Heart right ventricle (tissue), 16 donors: ENCODE measurements at regions of chr1 and their contacts with region 1.

Region 1: DNA sequence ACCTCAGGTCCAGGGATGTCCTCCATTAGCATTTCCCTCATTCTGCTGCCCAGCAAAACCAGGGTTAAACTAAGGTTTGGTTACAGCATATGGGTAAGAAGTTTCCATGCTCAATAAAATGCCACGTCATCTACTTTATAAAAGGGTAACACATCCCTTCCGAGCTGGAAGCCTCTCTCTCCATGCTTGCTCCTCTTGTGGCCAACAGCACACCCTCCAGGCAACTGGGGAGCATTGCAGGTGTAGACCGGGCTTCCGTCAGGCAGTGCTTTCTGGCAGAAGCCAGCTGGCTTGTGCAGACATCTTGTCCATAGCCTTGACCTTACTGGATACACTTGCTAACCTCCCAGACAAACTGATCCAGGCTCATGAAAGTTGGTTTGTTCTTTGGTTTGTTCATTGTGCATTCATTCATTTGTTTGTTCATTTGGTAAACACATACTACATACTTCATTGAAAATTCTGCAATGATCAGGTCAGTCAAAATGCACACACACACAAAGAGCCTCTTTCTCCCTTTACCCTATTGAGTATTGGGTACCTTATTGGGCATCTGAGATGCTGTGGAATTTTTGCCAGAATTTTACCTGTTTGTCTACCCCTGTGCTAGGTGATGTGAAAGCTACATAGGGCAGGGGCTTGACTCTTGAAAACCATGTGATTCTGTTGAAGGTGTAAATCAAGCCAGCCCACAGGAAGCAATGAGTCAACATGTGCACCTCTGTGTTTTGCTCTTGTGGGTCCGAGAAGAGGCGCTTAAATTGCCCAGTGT is 422.8 kb downstream of the CAMTA1 start:
- DNase-seq: peak; percentile 24 to 42
- ATAC-seq: peak in 7 of 8 donors; percentile 47 to 85 (median 70)
- H3K4me3 ChIP-seq: no peak overlapping the region
- H3K27ac ChIP-seq: no peak overlapping the region
- H3K4me1 ChIP-seq: no peaks in the 10 kb centered on the region
- H3K27me3 ChIP-seq: peaks cover 0 to 22% (median 8%) of the 10 kb centered on the region in 7 donors
- CTCF ChIP-seq: peak; percentile 50 to 75 (median 70)

Region 2: GRCh38 chr1:5565281-5566125 is 1642.6 kb before region 1 on chr1:
- intact Hi-C with region 1: loop called in 1 of 10 experiments (anchors 5 kb)
- DNase-seq: no peak
- ATAC-seq: no peak
- H3K4me3 ChIP-seq: no peak overlapping the region
- H3K27ac ChIP-seq: no peak overlapping the region
- H3K4me1 ChIP-seq: no peaks in the 10 kb centered on the region
- H3K27me3 ChIP-seq: peaks cover 0 to 7% (median 0%) of the 10 kb centered on the region in 7 donors
- CTCF ChIP-seq: no peak

Region 3: DNA sequence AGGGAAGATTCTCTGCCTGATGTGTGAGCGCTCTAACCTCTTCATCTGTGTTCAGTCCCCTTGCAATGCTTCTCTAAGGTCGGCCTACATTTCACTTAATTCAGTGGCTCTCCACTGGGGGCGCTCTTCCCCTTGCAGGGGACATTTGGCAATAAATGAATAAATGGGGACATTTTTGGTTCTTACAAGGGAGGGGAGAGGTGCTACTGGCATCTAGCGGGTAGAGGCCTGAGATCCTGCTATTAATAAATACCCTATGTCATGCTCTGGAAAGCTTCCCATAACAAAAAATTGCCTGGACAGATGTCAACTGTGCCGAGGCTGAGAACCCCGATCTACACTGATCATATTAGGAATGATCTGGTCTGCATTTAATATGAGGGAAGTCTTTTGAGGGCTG is 480.5 kb before region 1 on chr1:
- intact Hi-C with region 1: loop called in 6 of 10 experiments (anchors 5 to 10 kb)
- DNase-seq: peak; percentile 41 to 44
- ATAC-seq: peak; percentile 28 to 68 (median 58)
- H3K4me3 ChIP-seq: no peak overlapping the region
- H3K27ac ChIP-seq: no peak overlapping the region
- H3K4me1 ChIP-seq: peaks cover 0 to 14% (median 0%) of the 10 kb centered on the region in 9 donors
- H3K27me3 ChIP-seq: no peaks in the 10 kb centered on the region
- CTCF ChIP-seq: peak; percentile 72 to 90 (median 85)

Region 4: DNA sequence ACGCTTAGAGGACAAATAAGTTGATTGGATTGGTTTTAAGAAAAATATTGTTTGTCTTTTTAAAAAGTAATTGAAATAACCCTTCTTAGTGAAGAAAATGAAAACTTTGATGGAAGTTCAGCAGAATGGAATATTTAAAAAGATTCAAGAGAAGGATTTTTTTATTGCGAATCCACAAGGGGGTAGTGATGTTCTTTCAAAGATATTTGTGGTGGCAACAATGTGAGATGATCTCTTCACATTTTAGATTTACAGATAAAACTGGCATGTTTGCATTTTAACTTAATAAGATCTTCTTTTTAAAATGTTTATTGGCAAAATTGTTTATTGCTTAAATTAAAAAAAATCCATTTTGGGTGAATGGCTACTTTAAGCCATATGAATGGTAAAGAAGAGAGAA is 413.9 kb before region 1 on chr1:
- intact Hi-C with region 1: loop called in 3 of 10 experiments (anchors 5 to 10 kb)
- DNase-seq: no peak
- ATAC-seq: no peak
- H3K4me3 ChIP-seq: no peak overlapping the region
- H3K27ac ChIP-seq: no peak overlapping the region
- H3K4me1 ChIP-seq: peaks cover 0 to 77% (median 55%) of the 10 kb centered on the region in 9 donors
- H3K27me3 ChIP-seq: no peaks in the 10 kb centered on the region
- CTCF ChIP-seq: peak in 7 of 9 donors; percentile 36 to 65 (median 58)

Region 5: DNA sequence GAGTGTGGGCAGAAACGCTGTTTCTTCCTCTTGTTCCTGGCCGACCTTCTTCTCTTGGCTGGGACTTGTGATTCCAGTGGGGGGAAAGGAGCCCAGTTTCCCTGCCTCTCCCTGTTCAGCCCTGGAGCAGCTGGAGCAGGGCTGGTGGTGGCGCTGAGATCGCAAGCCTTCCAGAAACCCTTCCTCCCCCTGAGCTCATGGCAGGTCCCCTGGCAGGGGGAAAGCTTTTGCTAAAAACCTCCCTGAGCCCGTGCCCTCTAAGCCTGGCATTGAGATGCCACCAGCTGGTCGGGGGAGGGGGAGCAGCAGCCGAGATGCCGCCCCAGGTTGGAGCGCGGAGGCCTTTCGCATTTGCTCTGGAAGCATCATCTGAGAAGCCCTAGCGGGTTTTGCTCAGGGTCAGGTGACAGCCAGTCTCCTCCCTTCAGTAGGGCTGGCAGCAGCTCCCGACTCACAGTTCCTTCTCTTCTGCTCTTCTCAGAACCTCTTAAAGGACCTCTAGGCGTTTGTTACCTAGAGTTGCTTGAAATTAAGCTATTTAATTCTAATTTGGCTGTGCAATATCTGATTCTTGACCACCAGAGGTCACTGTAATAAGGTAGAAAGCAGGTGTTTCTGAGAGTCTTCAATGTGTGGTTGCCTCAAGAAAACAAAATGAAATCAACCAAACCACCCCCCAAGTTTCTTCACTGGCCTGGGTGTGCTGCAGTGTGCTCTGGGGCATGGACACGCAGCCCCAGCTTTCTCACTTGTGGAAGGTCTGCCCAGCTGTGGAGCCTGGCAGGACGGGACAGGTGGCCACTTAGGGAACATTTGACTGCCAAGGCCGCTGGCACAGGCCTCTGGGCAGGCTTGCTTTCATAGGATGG is 165.5 kb before region 1 on chr1:
- intact Hi-C with region 1: loop called in 7 of 10 experiments (anchors 2 to 10 kb)
- DNase-seq: no peak
- ATAC-seq: peak in 1 of 8 donors; percentile 26
- H3K4me3 ChIP-seq: no peak overlapping the region
- H3K27ac ChIP-seq: no peak overlapping the region
- H3K4me1 ChIP-seq: no peaks in the 10 kb centered on the region
- H3K27me3 ChIP-seq: peaks cover 0 to 28% (median 9%) of the 10 kb centered on the region in 7 donors
- CTCF ChIP-seq: peak in 8 of 9 donors; percentile 10 to 64 (median 54)

Region 6: GRCh38 chr1:7070389-7071029 is 137.6 kb before region 1 on chr1:
- intact Hi-C with region 1: loop called in 1 of 10 experiments (anchors 10 kb)
- DNase-seq: peak; percentile 42 to 66
- ATAC-seq: peak; percentile 71 to 92 (median 84)
- H3K4me3 ChIP-seq: peak overlapping the region in 9 of 10 donors; percentile 17 to 53 (median 42)
- H3K27ac ChIP-seq: no peak overlapping the region
- H3K4me1 ChIP-seq: peaks cover 0 to 9% (median 7%) of the 10 kb centered on the region in 9 donors
- H3K27me3 ChIP-seq: peaks cover 0 to 11% (median 0%) of the 10 kb centered on the region in 7 donors
- CTCF ChIP-seq: peak; percentile 70 to 90 (median 84)

Region 7: DNA sequence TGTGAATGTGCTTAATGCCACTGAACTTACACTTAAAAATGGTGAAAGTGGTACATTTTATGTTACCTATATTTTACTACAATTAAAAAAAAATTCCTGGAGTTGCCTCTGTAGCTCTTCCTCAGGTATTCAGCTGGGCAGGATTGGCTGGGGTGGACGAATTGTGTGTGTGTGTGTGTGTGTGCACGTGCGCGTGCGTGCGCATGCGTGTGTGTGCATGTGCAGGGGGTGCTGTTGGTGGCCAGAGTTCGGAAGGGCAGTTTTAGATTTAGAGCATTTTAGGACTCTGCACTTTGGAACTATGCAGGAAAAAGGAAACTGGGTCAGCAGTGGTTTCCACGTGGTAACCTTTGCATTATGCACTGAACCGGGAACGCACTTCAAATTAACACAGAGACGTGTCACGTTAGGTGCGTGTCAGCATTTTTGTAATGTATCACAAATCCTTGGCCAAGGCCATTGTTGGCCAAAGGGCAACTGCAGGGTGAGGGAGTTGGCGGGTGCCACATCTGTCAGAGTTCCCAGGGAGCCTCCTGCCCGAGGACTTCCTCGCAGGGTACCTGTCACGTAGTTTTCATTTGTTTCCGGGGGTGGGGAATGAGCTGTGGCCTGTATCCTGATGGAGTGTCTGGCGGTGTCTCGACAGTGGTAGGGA is 110.0 kb before region 1 on chr1:
- intact Hi-C with region 1: loop called in 1 of 10 experiments (anchors 10 kb)
- DNase-seq: no peak
- ATAC-seq: no peak
- H3K4me3 ChIP-seq: no peak overlapping the region
- H3K27ac ChIP-seq: no peak overlapping the region
- H3K4me1 ChIP-seq: no peaks in the 10 kb centered on the region
- H3K27me3 ChIP-seq: peaks cover 0 to 61% (median 27%) of the 10 kb centered on the region in 7 donors
- CTCF ChIP-seq: no peak